Psoas muscle (tissue), 8 donors: ENCODE measurements at regions of chr15 and their contacts with region 1.

Region 1: DNA sequence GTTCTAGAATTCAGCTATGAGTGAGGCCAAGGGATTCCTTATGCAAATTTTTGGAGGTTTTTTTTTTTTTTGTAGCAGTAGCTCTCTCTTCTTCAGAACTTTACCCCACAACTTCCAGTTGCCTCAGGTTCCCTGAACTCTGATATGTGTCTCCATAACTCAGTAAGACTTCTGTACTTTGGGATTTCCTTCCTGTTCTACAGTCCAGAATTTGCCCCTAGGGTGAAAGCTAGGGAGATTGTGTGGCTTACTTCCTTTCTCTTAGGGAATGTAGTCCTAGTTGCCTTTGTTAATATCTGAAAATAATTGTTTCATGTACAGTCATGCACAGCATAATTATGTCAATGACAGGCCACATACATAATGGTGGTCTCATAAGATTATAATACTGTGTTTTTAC is 30.8 kb downstream of the LRRC28 start:
- DNase-seq: no peak
- ATAC-seq: no peak
- H3K4me3 ChIP-seq: no peak overlapping the region
- H3K27ac ChIP-seq: no peak overlapping the region
- H3K4me1 ChIP-seq: peaks cover 18% of the 10 kb centered on the region
- H3K27me3 ChIP-seq: no peaks in the 10 kb centered on the region
- CTCF ChIP-seq: no peak

Region 2: GRCh38 chr15:99361541-99362185 is 79.5 kb after region 1 on chr15:
- intact Hi-C with region 1: loop called (anchors 2 to 5 kb)
- DNase-seq: no peak
- ATAC-seq: no peak
- H3K4me3 ChIP-seq: no peak overlapping the region
- H3K27ac ChIP-seq: no peak overlapping the region
- H3K4me1 ChIP-seq: peaks cover 5% of the 10 kb centered on the region
- H3K27me3 ChIP-seq: no peaks in the 10 kb centered on the region
- CTCF ChIP-seq: peak; percentile 33

Region 3: DNA sequence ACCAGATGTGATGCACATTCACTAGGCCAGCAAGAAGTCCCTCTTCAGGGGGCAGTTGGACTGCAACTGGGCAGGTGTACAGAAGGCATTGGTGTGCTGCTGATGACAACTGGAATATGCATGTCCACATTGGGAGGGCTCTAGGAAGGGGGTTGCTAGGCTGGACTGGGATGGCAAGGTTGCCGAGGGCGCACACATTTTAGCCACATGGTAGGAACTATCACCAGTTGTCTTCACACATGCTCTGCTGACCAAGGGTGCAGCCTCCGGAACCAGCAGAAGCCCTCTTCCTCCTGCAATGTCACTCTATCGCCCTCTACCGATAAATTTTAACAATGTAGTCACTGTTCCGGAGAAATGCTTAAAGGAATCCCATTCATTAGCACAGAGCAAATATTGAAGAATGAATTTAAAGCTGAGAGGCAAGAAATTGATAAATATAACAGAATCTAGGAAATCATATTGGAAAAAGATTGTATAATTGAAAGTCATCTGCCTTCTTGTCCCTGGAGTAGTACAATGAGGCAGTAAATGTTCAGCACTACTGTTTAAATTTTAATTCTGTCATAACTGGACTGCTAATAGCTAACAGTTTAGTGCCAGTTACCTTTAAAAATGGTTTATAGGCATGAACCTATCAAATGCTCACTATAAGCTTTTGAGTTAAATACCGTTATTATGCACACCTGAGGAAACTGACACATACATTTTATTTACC is 473.7 kb after region 1 on chr15:
- intact Hi-C with region 1: loop called (anchors 5 kb)
- DNase-seq: peak; percentile 35 to 66
- ATAC-seq: peak; percentile 82 to 95 (median 86)
- H3K4me3 ChIP-seq: no peak overlapping the region
- H3K27ac ChIP-seq: no peak overlapping the region
- H3K4me1 ChIP-seq: no peaks in the 10 kb centered on the region
- H3K27me3 ChIP-seq: no peaks in the 10 kb centered on the region
- CTCF ChIP-seq: peak; percentile 84